Mammary epithelial cell (primary cell): ENCODE measurements at regions of chr19 and their contacts with region 1.

Region 1: DNA sequence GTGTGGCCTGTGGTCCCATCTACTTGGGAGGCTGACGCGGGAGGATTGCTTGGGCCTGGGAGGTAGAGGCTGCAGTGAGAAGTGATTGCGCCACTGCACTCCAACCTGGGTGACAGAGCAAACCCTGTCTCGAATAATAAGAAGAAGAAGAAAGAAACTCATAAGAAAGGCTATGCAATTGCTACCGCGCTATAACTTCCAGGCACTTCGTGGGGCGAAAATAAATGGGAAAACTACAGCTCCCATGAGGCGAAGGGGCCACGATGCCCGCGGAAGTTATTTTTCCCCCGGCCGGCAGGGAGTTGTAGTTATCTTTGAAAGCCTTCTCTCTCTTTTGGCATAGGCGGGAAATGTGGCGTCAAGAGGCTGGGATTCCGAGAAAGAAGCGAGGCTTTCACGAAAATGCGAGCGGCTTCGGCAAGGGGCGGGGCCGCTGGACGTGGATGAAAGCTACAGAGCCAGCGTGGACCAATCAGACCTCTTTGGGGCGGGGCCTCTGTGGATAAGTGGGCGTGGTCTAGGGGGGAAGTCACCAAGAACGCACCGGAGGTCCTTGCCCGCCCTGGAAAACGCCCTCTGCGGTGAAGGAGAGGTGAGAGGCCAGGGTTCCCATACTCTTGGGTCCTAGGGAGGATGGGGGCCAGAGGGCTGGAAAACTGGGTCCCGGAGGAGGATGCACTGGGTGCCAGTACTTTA is at the start of gene NUCB1:
- DNase-seq: peak; percentile 98
- H3K4me3 ChIP-seq: peak within 1 kb of the TSS; percentile 79 to 90 (median 83)
- H3K27ac ChIP-seq: peak within 1 kb of the TSS; percentile 82
- H3K4me1 ChIP-seq: peaks cover 3% of the 10 kb centered on the region
- H3K27me3 ChIP-seq: peaks cover 3% of the 10 kb centered on the region
- CTCF ChIP-seq: peak in 1 of 2 donors; percentile 48
- total RNA-seq, gene NUCB1: 132 to 133 TPM

Region 2: DNA sequence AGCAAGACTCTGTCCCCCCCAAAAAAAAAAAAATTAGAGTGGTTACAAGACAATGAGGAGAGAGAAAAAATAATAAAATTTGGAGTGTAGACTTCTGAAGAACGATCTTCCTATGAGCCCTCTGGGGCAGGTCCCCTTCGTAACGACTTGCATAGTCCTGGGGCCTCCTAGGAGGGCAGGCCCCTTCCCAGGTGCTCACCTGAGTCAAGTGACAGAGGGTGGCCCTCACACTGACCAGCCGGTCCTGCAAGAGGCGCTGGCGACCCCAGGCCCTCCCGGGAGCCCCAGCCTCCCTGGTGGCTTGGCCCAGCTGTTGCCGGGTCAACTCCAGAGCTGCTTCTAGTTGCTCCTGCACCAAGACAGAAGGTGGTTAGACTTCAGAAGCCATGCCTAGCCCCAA is 46.4 kb before region 1 on chr19:
- CTCF ChIA-PET with region 1: no interaction called
- dilution Hi-C with region 1: loop called (anchors 5 kb)
- in situ Hi-C with region 1: no loop called
- intact Hi-C with region 1: no loop called
- DNase-seq: no peak
- H3K4me3 ChIP-seq: no peak overlapping the region
- H3K27ac ChIP-seq: no peak overlapping the region
- H3K4me1 ChIP-seq: no peaks in the 10 kb centered on the region
- H3K27me3 ChIP-seq: no peaks in the 10 kb centered on the region
- CTCF ChIP-seq: no peak

Region 3: GRCh38 chr19:48915757-48916156 is 15.8 kb after region 1 on chr19:
- CTCF ChIA-PET with region 1: no interaction called
- dilution Hi-C with region 1: no loop called
- in situ Hi-C with region 1: no loop called
- intact Hi-C with region 1: no loop called
- DNase-seq: no peak
- H3K4me3 ChIP-seq: no peak overlapping the region
- H3K27ac ChIP-seq: no peak overlapping the region
- H3K4me1 ChIP-seq: no peaks in the 10 kb centered on the region
- H3K27me3 ChIP-seq: no peaks in the 10 kb centered on the region
- CTCF ChIP-seq: no peak

Region 4: GRCh38 chr19:48926909-48927308 is 27.0 kb after region 1 on chr19:
- CTCF ChIA-PET with region 1: no interaction called
- dilution Hi-C with region 1: no loop called
- in situ Hi-C with region 1: no loop called
- intact Hi-C with region 1: loop called (anchors 1 kb)
- DNase-seq: peak; percentile 99
- H3K4me3 ChIP-seq: no peak overlapping the region
- H3K27ac ChIP-seq: peak overlapping the region; percentile 92
- H3K4me1 ChIP-seq: peaks cover 23% of the 10 kb centered on the region
- H3K27me3 ChIP-seq: no peaks in the 10 kb centered on the region
- CTCF ChIP-seq: no peak

Region 5: GRCh38 chr19:48965040-48965805 is 65.3 kb after region 1 on chr19 and contains the start of gene FTL:
- CTCF ChIA-PET with region 1: no interaction called
- dilution Hi-C with region 1: loop called (anchors 5 kb)
- in situ Hi-C with region 1: no loop called
- intact Hi-C with region 1: loop called (anchors 1 kb)
- DNase-seq: peak; percentile 80
- H3K4me3 ChIP-seq: peak within 1 kb of the TSS; percentile 51 to 62 (median 52)
- H3K27ac ChIP-seq: peak within 1 kb of the TSS; percentile 7
- H3K4me1 ChIP-seq: peaks cover 27% of the 10 kb centered on the region
- H3K27me3 ChIP-seq: no peaks in the 10 kb centered on the region
- CTCF ChIP-seq: no peak
- total RNA-seq, gene FTL: 186 to 287 TPM

Region 6: DNA sequence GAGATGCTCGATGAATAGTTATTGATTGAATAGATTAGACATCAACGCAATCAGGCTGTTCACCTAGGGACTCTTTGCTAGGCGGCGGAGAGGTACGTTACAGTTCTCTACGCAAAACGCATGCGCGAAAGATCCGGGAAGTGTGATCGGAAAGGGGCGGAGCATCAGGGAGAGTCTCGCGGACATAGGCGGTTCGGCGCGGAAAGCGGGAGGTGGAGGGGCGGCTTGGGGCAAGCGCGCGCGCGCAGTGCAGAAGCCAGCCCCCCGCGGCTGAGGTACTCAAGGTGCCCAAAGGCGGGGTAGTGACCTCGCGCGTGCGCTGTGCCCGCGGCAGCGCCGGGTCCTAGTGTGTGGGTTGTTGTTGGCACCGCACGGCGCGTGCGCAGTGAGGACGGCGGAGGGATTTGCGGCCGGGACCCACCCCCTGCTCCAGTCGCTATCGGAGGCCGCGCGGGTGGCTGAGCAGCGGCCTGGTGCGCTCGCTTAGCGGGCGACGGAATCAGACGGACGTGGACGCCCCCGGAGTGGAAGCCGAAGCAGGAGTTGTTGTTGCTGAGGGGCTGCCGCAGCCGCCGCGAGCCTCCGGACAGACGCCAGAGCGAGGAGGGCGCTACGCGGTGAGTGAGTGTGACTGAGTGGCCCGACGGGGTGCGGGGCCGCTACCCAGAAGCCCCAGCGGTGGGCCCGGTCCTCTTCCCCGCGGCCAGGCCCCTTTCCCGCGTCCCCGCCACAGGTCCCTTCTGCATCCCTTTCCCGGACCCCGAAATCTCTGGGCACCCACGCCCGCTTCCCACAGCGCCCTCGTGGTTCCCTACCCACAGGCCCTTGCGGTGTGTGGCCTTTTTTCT is 185.3 kb after region 1 on chr19 and contains the start of gene SNRNP70:
- CTCF ChIA-PET with region 1: no interaction called
- dilution Hi-C with region 1: no loop called
- in situ Hi-C with region 1: no loop called
- intact Hi-C with region 1: loop called (anchors 1 kb)
- DNase-seq: peak; percentile 99
- H3K4me3 ChIP-seq: peak within 1 kb of the TSS; percentile 74 to 93 (median 90)
- H3K27ac ChIP-seq: peak within 1 kb of the TSS; percentile 82
- H3K4me1 ChIP-seq: peaks cover 11% of the 10 kb centered on the region
- H3K27me3 ChIP-seq: no peaks in the 10 kb centered on the region
- CTCF ChIP-seq: no peak
- total RNA-seq, gene SNRNP70: 98.5 to 183 TPM

Region 7: DNA sequence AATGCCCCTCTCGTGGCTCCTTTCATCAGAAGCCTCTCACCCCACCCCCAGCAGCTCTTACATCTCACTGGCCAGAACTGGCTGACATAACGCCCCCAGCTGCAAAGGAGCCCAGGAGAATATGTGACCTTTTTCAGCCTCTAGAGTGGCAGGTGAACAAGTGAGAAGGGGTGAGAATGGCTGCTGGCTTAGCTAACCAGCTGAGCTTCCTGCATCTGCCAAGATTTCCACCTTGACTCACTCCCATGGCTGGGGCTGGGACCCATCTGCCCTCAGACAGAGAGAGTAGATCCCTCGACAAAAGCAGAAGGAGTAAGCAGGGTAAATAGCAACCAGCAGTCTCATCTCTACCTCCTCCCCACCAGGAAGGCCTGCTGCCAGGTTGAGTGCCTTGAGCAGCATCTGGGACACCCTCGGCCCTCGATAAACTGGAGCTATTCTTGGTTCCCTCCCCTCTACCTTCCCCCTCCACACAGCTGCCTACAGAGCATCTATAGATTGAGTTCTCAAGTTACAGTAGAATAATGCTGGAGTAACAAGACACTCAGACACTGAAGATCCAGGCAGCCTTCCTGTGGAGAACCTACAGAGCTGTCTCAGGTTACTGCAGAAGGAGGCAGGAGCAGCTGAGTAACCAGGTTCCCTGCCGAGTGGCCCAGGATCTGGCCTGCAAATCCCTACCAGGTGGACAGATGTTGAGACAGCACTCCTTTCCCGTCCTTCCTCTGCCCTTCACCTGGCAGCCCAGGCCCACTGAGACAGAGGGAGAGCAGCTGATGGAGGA is 503.7 kb after region 1 on chr19:
- CTCF ChIA-PET with region 1: no interaction called
- dilution Hi-C with region 1: no loop called
- in situ Hi-C with region 1: no loop called
- intact Hi-C with region 1: no loop called
- DNase-seq: no peak
- H3K4me3 ChIP-seq: no peak overlapping the region
- H3K27ac ChIP-seq: no peak overlapping the region
- H3K4me1 ChIP-seq: no peaks in the 10 kb centered on the region
- H3K27me3 ChIP-seq: no peaks in the 10 kb centered on the region
- CTCF ChIP-seq: no peak